Colonic mucosa (tissue), 4 donors: ENCODE measurements at regions of chr12 and their contacts with region 1.

Region 1: DNA sequence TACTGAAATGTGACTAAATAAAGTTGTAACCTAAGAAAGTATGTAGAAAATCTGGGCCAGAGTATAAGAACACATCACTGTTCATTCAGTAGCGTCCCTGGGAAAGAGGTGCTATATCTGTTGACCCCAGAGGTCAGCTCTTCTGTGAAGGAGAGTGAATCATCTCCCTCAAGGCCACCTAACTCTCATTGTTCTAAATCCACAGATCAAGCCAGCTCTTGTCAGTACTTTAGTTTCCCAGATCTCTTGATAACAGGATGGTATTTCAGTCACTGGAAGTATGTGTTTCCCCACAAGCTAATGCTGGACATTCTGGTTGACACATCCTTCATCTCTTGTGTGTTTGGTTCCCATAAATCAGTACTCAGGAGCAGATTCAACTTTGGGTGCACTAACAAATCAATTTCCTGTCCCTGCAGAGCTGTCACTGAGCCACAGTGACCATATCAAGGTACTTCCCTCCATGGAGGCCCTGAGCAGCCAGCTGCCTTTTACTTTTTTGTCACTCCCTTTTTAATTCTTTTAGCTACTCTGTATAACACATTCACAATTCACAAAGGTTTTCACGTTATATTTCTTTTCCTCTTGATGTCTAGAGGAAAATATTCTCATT is 7.8 kb downstream of the KRT1 start:
- DNase-seq: no peak
- H3K4me3 ChIP-seq: no peak overlapping the region
- H3K27ac ChIP-seq: no peak overlapping the region
- H3K4me1 ChIP-seq: no peaks in the 10 kb centered on the region
- H3K27me3 ChIP-seq: no peaks in the 10 kb centered on the region
- CTCF ChIP-seq: no peak

Region 2: DNA sequence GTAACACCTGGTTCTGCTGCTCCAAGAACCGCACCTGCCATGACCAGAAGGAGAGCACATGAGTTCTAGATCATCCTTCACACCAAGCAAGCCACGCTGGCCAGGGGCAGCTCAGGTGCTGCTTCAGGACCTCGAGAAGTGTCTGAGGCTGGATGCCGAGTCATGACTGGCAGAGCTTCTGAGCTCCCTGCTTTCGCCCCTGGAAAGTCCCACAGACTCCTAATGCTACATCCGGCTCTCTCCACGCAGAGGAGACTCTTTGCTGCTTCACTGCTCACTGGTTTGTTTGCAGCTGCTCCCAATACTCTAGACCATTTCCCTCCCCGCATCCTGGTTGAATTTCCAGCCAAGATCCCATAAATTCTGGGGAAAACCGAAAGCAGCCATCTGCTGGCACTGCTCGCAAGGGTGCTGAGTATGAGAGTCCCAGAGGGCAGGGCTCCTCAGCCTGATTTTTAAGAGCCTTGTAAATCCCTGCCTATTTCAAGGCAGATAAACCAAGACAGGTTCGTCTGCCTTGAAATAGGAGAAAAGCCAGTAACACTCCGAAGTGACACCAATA is 21.8 kb before region 1 on chr12:
- intact Hi-C with region 1: no loop called
- DNase-seq: peak; percentile 61
- H3K4me3 ChIP-seq: no peak overlapping the region
- H3K27ac ChIP-seq: peak overlapping the region; percentile 45
- H3K4me1 ChIP-seq: peaks cover 4% of the 10 kb centered on the region
- H3K27me3 ChIP-seq: no peaks in the 10 kb centered on the region
- CTCF ChIP-seq: no peak

Region 3: DNA sequence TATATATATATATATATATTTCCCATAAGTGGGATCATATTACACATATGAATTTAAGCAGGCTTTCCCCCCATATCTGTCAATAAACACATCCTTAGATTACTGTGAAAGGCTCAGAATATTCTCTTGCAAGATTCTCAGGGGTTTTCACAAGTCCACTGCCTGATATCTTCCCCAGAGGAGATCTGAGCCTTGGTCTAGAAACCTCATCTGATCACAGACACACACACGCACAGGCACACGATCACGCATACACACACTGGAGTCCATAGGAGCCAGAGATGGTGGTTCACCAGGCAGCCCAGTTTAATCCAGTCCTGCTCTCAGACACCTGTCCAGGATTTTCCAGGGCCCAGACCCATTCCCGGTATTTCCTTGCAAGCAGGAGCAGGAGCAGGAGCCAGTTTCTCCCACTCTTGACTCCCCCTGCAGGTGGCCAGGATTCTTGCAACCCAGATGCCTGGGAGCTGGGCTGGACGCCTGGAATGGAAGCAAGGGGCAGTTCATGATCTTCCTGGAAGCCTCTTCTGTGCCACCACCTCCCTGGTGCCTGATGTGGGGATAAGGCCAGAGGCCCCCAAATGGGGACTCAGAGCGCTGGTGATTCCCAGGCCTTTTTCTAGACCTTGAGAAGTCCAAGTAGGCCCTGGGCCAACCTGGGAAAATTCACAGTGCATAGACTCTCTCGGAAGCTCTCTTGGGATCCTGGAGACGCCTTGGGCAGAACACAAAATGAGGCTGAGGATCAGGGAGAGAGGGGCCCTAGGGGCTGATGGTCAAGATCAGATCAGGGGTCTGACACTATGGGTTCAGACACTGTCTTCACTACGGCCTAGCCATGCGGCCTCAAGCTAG is 192.9 kb after region 1 on chr12:
- intact Hi-C with region 1: loop called (anchors 10 kb)
- DNase-seq: peak; percentile 79
- H3K4me3 ChIP-seq: no peak overlapping the region
- H3K27ac ChIP-seq: no peak overlapping the region
- H3K4me1 ChIP-seq: no peaks in the 10 kb centered on the region
- H3K27me3 ChIP-seq: no peaks in the 10 kb centered on the region
- CTCF ChIP-seq: peak; percentile 69